ENCODE measurements at regions of chr13 and their contacts with region 1.

Region 1: GRCh38 chr13:57640582-57640981 is 9.0 kb downstream of the PCDH17 start:
- DNase-seq: no peak
- H3K4me3 Mint-ChIP-seq: no peak overlapping the region
- H3K27ac Mint-ChIP-seq: no peak overlapping the region
- H3K4me1 Mint-ChIP-seq: no peaks in the 10 kb centered on the region
- H3K27me3 Mint-ChIP-seq: no peaks in the 10 kb centered on the region
- CTCF ChIP-seq: no peak

Region 2: GRCh38 chr13:57716295-57716694 is 75.7 kb after region 1 on chr13:
- CTCF ChIA-PET with region 1: no interaction called
- intact Hi-C with region 1: loop called (anchors 10 kb)
- DNase-seq: no peak
- H3K4me3 Mint-ChIP-seq: no peak overlapping the region
- H3K27ac Mint-ChIP-seq: no peak overlapping the region
- H3K4me1 Mint-ChIP-seq: no peaks in the 10 kb centered on the region
- H3K27me3 Mint-ChIP-seq: no peaks in the 10 kb centered on the region
- CTCF ChIP-seq: no peak